ENCODE measurements at regions of chr3 and their contacts with region 1.

Region 1: GRCh38 chr3:42247576-42248027 is 18.4 kb downstream of the CCK start:
- DNase-seq: peak; percentile 69
- H3K4me3 ChIP-seq: no peak overlapping the region
- H3K27ac ChIP-seq: no peak overlapping the region
- H3K4me1 ChIP-seq: no peaks in the 10 kb centered on the region
- H3K27me3 ChIP-seq: peaks cover 46% of the 10 kb centered on the region

Region 2: GRCh38 chr3:42443819-42444436 is 196.3 kb after region 1 on chr3:
- in situ Hi-C with region 1: loop called (anchors 5 kb)
- DNase-seq: peak; percentile 85
- H3K4me3 ChIP-seq: no peak overlapping the region
- H3K27ac ChIP-seq: no peak overlapping the region
- H3K4me1 ChIP-seq: no peaks in the 10 kb centered on the region
- H3K27me3 ChIP-seq: peaks cover 34% of the 10 kb centered on the region

Measured in GM23248 (cell line).